Activated T-helper 2 cell treated with anti-CD3 and anti-CD28 coated beads, Interferon-gamma antibody, Interleukin-2, Interleukin-4, amounts not matched to agents 10 μg/mL and 5 μg/mL and 100 μg/mL, durations not matched to agents 14 hours and 24 hours and 36 hours (primary cell): ENCODE measurements at regions of chr17 and their contacts with region 1.

Region 1: DNA sequence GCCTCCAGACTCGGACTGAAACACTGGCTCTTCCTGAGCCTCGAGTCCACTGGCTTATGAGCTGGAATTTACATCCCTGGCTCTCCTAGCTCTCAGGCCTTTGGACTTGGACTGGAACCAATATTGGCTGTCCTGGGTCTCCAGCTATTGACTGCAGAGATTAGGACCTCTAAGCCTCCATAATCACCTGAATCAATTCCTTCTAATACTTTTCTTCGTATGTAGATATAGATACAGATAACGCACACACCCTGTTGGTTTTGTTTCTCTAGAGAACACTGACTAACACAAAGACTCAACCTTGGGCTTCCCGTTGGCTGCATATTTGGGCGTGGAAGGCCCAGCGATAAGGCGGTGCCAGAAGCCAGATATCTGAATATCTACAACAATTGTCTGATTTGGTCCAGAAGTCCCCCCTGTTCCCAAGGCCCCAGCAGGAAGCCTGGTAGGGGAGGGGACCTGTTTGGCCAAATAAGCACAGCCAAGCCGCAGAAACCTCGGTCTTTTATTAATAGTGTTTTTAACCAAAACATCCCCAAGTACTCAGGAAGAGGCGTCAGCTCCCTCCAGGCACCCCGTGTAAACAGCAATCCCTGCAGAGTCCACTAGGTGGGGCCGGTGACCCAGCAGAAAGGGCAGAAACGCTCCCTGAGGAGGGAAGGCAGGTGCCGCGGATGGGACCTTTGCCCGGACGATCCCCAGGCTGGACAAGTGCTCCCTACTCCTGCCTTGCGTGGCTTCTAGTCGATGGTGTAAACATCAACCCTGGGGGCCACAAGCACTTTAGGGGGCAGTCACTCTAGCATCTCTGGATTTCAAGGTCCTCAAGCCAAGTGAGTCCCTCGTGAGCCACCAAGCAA is 57.0 kb downstream of the ABR start:
- DNase-seq: peak; percentile 74
- H3K4me3 Mint-ChIP-seq: no peak overlapping the region
- H3K27ac Mint-ChIP-seq: no peak overlapping the region
- H3K4me1 Mint-ChIP-seq: peaks cover 8% of the 10 kb centered on the region
- H3K27me3 Mint-ChIP-seq: no peaks in the 10 kb centered on the region

Region 2: GRCh38 chr17:1058423-1059130 is 64.2 kb before region 1 on chr17:
- intact Hi-C with region 1: no loop called
- DNase-seq: peak; percentile 34
- H3K4me3 Mint-ChIP-seq: no peak overlapping the region
- H3K27ac Mint-ChIP-seq: no peak overlapping the region
- H3K4me1 Mint-ChIP-seq: no peaks in the 10 kb centered on the region
- H3K27me3 Mint-ChIP-seq: no peaks in the 10 kb centered on the region

Region 3: DNA sequence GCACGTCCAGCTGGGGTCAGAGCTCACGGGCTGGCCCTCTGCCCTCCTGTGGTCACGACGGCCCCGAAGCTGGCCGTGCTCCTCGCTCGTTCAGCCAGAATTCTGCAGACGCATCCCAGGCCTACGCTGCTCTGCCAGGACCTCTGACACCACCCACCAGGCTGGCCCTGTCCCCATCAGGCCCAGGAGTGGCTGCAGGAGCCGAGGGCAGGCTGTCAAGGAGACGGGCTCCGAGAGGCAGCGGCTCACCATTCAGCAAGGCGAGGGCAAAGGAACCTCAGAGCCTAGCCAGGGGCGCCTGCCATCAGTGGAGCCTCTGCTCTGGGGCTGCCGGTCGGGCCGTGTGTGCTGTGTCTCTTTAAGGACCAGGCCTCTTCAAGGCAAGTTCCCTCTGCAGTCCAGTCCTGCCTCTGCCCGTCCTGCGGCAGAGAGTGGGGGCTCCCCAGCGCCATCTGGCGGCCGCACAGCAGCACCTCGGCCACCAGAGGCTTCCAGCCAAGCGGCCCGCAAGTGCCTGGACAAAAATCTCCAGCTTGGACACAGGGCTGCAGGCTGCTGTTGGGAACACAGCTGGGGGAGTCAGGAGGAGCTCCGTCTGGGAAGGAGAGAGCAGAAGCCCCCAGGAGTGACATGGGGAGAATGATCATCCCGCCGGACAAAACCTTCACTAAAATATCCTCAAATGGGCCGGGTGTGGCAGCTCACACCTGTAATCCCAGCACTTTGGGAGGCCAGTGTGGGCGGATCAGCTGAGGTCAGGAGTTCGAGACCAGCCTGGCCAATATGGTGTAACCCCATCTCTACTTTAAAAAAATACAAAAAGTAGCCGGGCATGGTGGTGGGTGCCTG is 64.4 kb after region 1 on chr17:
- intact Hi-C with region 1: loop called (anchors 1 kb)
- DNase-seq: peak; percentile 66
- H3K4me3 Mint-ChIP-seq: no peak overlapping the region
- H3K27ac Mint-ChIP-seq: no peak overlapping the region
- H3K4me1 Mint-ChIP-seq: peaks cover 9% of the 10 kb centered on the region
- H3K27me3 Mint-ChIP-seq: peaks cover 5% of the 10 kb centered on the region